CD8-positive, alpha-beta memory T cell (primary cell): ENCODE measurements at regions of chr3 and their contacts with region 1.

Region 1: DNA sequence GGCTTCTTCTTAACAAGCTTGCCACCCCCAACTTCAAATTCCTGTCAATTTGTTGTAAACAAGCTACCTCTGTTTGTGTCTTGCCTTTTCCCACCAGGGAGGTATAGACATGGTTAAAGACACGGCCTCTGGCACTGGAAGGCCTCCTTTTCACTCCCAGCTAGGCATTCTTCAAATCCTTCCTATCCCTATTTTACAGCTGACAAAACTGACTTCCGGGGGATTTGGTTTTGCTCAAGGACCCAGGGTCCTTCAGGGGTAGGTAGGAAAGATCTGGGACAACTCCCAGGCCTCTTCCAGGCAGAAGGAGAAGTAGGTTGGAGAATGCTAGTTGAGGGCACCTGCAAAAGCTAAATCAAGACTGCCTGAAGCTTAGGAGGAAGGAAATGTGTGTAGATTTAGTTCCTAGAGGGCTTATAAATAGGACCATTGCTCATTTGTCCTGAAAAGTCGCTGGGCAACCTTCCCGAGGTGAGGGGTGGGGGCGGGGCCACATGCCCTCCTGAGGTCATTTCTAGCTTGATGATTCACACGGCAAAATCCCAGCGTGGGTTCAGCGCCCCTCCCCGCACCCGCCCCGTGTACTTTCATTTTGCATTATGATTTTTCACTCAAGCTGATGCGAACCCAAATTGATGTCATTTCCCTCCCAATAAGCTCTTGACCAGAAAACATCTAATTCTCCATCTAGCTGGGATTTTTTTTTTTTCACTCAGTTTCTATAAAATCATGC is 365.5 kb downstream of the SHQ1 start:
- DNase-seq: peak; percentile 6 to 59 (median 31)
- H3K4me3 ChIP-seq: peak overlapping the region; percentile 62
- H3K4me3 Mint-ChIP-seq: peak overlapping the region; percentile 83 to 88 (median 85)
- H3K27ac ChIP-seq: no peak overlapping the region
- H3K27ac Mint-ChIP-seq: peak overlapping the region in 6 of 8 donors; percentile 44 to 93 (median 84)
- H3K4me1 ChIP-seq: peaks cover 10% of the 10 kb centered on the region
- H3K4me1 Mint-ChIP-seq: peaks cover 14 to 22% (median 19%) of the 10 kb centered on the region in 3 donors
- H3K27me3 ChIP-seq: no peaks in the 10 kb centered on the region
- H3K27me3 Mint-ChIP-seq: peaks cover 0 to 4% of the 10 kb centered on the region in 2 donors

Region 2: DNA sequence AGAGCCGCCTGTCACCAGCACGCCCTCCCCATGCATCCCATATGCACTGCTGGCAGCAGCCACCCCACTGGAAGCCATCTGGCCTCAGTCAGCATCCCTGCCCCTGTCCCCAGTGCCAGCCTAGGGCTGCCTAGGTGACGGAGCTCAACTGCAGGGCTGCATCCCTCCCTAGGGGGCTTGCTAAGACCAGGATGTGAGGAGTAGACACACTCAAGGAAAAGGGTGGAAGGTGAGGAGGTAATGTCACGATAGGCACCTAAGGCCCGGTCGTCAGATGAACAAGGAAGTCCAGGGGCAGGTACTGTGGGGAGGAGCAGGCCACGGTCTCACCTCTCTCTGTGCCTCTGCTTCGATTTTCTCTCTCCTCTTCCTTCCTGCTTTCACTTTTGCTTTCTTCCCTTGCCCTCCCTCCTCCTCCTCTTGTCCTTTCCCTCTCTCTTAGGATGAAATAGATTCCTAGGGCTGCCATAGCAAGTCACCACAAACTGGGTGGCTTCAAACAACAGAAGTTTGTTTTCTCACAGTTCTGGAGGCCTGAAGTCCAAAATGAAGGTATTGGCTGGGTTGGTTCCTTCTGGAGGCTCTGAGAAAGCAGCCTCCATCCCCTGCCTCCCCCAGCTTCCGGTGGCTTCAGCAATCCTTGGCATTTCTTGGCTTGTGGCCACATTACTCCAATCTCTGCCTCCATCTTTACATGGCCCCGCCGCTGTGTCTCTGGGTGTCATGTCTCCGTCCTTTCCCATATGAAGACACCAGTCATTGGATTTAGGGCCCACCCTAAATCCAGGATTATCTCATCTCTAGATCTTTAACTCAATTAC is 67.2 kb after region 1 on chr3:
- CTCF ChIA-PET with region 1: no interaction called
- POLR2A ChIA-PET with region 1: interaction called, 12 read pairs
- DNase-seq: peak in 1 of 5 donors; percentile 21
- H3K4me3 ChIP-seq: peak overlapping the region; percentile 42
- H3K4me3 Mint-ChIP-seq: peak overlapping the region in 6 of 7 donors; percentile 44 to 81 (median 68)
- H3K27ac ChIP-seq: no peak overlapping the region
- H3K27ac Mint-ChIP-seq: peak overlapping the region; percentile 14 to 89 (median 66)
- H3K4me1 ChIP-seq: peaks cover 10% of the 10 kb centered on the region
- H3K4me1 Mint-ChIP-seq: peaks cover 10 to 18% (median 16%) of the 10 kb centered on the region in 3 donors
- H3K27me3 ChIP-seq: no peaks in the 10 kb centered on the region
- H3K27me3 Mint-ChIP-seq: peaks cover 0 to 3% of the 10 kb centered on the region in 2 donors